ENCODE measurements at regions of chr3 and their contacts with region 1.

Region 1: GRCh38 chr3:45199837-45200648 is 26.0 kb downstream of the TMEM158 start:
- DNase-seq: no peak
- H3K4me3 Mint-ChIP-seq: no peak overlapping the region
- H3K27ac Mint-ChIP-seq: no peak overlapping the region
- H3K4me1 Mint-ChIP-seq: no peaks in the 10 kb centered on the region
- H3K27me3 Mint-ChIP-seq: peaks cover 3% of the 10 kb centered on the region

Region 2: DNA sequence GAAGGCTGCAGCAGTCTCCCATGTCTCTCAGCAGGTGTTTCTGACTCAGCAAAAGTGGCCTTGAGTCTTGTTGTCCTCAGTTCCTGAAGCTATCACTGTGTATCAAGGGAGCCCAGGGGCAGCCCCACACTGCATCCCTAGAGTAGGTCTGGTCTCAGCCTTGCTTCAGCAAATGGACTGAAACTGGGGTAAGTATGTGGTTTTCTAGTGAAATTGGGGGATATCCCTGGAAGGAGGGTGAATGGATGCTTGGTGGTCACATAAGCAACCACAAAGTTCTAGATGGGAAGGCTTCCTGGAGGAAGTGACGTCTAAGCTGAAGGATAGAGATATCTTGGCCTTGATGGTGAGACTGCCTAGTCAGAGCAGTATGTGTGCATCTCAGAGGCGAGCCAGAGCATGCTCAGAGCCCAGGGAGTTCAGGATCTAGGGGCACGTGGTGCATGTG is 12.3 kb before region 1 on chr3:
- CTCF ChIA-PET with region 1: no interaction called
- intact Hi-C with region 1: loop called (anchors 1 kb)
- DNase-seq: peak; percentile 23
- H3K4me3 Mint-ChIP-seq: no peak overlapping the region
- H3K27ac Mint-ChIP-seq: no peak overlapping the region
- H3K4me1 Mint-ChIP-seq: peaks cover 7% of the 10 kb centered on the region
- H3K27me3 Mint-ChIP-seq: no peaks in the 10 kb centered on the region

Region 3: GRCh38 chr3:45528429-45528828 is 328.4 kb after region 1 on chr3:
- CTCF ChIA-PET with region 1: no interaction called
- intact Hi-C with region 1: no loop called
- DNase-seq: peak; percentile 67
- H3K4me3 Mint-ChIP-seq: no peak overlapping the region
- H3K27ac Mint-ChIP-seq: no peak overlapping the region
- H3K4me1 Mint-ChIP-seq: peaks cover 15% of the 10 kb centered on the region
- H3K27me3 Mint-ChIP-seq: no peaks in the 10 kb centered on the region